GM12878 (cell line): ENCODE measurements at regions of chr15 and their contacts with region 1.

Region 1: GRCh38 chr15:34861214-34861613 is 65.9 kb upstream of the ACTC1 start:
- DNase-seq: no peak
- ATAC-seq: no peak
- H3K4me3 ChIP-seq: no peak overlapping the region
- H3K27ac ChIP-seq: no peak overlapping the region
- H3K4me1 ChIP-seq: no peaks in the 10 kb centered on the region
- H3K27me3 ChIP-seq: no peaks in the 10 kb centered on the region
- CTCF ChIP-seq: no peak
- EP300 ChIP-seq: no peak
- POLR2A ChIP-seq: no peak
- RAD21 ChIP-seq: no peak

Region 2: GRCh38 chr15:34810455-34811146 is 50.6 kb before region 1 on chr15:
- CTCF ChIA-PET with region 1: no interaction called
- POLR2A ChIA-PET with region 1: no interaction called
- RAD21 ChIA-PET with region 1: interaction called, 3 read pairs
- SMC1A ChIA-PET with region 1: interaction called, 3 read pairs
- in situ Hi-C with region 1: loop called (anchors 5 kb)
- intact Hi-C with region 1: no loop called
- DNase-seq: no peak
- ATAC-seq: no peak
- H3K4me3 ChIP-seq: no peak overlapping the region
- H3K27ac ChIP-seq: no peak overlapping the region
- H3K4me1 ChIP-seq: no peaks in the 10 kb centered on the region
- H3K27me3 ChIP-seq: no peaks in the 10 kb centered on the region
- CTCF ChIP-seq: no peak
- EP300 ChIP-seq: no peak
- POLR2A ChIP-seq: no peak
- RAD21 ChIP-seq: no peak